ENCODE measurements at regions of chr9 and their contacts with region 1.

Region 1: GRCh38 chr9:38263532-38263931 is 129.0 kb upstream of the ALDH1B1 start:
- DNase-seq: peak; percentile 48
- ATAC-seq: no peak
- H3K4me3 ChIP-seq: no peak overlapping the region
- H3K27ac ChIP-seq: no peak overlapping the region
- H3K4me1 ChIP-seq: no peaks in the 10 kb centered on the region
- H3K27me3 ChIP-seq: peaks cover 5% of the 10 kb centered on the region
- CTCF ChIP-seq: peak; percentile 67
- POLR2A ChIP-seq: no peak
- RAD21 ChIP-seq: peak; percentile 80

Region 2: DNA sequence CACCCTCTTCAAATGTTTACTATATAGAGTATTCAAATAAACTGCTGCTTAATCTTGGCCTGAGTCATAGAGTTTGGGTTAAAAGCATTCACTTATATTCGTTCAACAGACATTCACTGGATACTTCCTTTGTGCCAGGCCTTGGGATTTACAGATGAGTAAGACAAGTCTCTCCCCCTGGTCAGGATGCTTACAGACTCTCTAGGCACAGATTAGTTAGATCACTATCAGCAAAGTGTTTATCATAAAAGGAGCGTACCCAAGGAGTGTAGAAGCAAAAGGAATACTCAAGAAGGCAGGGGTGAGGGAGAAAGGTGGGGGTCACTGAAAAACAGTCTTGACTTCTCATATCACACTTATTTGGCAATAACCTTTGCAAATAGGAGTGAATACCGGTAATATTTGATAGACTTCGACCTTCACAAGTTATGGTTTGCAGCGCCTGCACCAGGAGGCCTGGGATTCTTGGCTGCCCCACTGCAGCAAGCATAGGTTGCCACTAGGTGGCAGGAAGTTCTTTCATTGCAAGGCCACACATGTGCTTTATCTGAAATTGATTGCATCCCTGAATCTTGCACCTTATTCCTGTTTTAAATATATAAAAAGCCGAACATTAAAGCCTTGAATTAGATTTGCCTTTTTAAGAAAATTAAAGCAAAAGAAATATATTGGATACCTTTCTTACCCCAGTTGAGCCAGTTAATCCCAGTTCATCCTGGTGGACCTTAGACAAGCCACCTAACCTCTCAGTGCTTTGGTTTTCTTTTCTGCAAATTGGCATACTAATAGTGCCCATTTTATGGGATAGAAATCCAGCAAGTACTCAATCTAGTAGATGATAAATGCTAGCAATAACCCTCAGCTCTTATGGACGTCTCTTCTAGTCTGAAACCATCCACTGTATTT is 516.4 kb before region 1 on chr9:
- CTCF ChIA-PET with region 1: no interaction called
- POLR2A ChIA-PET with region 1: no interaction called
- dilution Hi-C with region 1: no loop called
- in situ Hi-C with region 1: no loop called
- intact Hi-C with region 1: loop called (anchors 5 kb)
- DNase-seq: peak; percentile 86
- ATAC-seq: peak; percentile 93
- H3K4me3 ChIP-seq: no peak overlapping the region
- H3K27ac ChIP-seq: no peak overlapping the region
- H3K4me1 ChIP-seq: peaks cover 8% of the 10 kb centered on the region
- H3K27me3 ChIP-seq: peaks cover 21% of the 10 kb centered on the region
- CTCF ChIP-seq: peak; percentile 79
- POLR2A ChIP-seq: no peak
- RAD21 ChIP-seq: peak; percentile 81

Region 3: DNA sequence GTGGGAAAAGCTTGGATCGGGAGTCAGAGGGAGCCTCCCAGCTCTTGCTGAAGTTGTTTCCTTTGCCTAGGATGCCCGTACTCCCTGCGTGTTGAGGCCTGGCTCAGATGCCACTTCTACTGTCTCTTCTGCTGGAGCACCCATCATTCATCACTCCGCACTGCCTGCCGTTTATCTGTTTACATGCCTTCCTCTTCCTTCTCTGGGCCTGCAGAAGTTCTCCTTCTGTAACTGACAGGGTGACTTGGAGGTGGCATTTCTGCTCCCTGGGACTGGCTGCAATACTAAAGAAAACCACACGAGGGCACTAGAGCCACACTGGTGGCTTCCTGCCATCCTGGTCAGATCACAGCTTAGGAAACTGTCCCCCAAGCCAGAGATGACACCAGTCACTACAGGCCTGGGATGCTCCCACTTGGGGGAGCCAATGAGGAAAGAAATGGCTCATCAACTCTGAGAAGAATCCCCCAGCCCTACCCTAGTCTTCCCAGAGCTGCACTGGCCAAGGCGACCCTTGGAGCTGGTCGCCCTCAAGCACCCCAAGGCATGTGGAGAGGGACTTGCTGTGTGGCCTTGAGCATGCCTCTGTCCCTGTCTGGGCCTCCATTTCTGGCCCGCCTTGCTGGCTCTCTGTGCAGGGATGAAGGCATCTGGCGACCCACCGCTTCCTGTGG is 349.9 kb before region 1 on chr9:
- CTCF ChIA-PET with region 1: interaction called, 3 read pairs
- POLR2A ChIA-PET with region 1: no interaction called
- dilution Hi-C with region 1: no loop called
- in situ Hi-C with region 1: loop called (anchors 5 kb)
- intact Hi-C with region 1: loop called (anchors 1 kb)
- DNase-seq: peak; percentile 72
- ATAC-seq: peak; percentile 90
- H3K4me3 ChIP-seq: no peak overlapping the region
- H3K27ac ChIP-seq: no peak overlapping the region
- H3K4me1 ChIP-seq: peaks cover 17% of the 10 kb centered on the region
- H3K27me3 ChIP-seq: no peaks in the 10 kb centered on the region
- CTCF ChIP-seq: peak; percentile 98
- POLR2A ChIP-seq: peak; percentile 60
- RAD21 ChIP-seq: peak; percentile 100

Region 4: DNA sequence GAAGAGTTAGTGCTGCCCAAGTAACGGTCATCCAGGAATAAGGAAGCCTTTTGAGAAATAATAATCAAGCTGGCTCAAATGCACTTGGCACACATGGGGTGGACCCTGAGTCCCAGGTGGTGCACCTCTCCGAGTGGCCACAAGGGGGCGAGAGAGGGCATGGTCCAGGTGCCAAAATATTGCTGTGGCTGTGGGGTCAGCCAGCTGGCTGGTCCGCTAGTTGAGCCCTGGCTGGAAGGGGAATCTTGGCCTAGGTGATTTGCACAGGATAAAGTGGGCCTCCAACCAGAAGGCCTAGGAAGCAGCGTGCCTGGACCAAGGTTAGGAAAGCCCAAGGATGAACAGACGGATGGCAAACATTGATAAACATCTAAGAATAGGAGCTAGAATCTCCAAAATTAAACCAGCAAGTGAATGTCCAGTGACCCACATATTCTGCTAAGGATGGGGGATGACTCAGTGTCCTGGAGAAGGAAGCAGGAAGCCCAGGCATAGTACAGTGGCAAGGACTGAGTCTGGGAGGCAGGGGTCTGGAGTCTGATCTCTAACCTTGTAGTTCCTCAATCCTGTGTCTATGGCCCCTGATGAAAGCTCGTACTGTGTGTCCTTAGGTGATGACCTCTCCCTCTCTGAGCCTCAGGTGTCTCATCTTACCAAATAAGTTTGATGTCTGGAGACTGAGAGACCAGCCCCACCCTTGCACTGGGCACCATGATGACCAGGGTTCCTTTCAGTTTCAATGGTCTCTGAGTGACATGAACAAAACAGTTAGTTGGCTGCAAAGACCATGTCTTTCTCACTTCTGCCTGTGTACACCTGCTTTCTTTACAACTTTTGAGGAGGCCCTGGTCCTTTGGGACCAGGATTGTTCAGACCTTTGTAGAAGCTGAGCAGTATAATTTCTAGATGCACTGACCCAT is 175.3 kb before region 1 on chr9:
- CTCF ChIA-PET with region 1: interaction called, 3 read pairs
- POLR2A ChIA-PET with region 1: no interaction called
- dilution Hi-C with region 1: no loop called
- in situ Hi-C with region 1: no loop called
- intact Hi-C with region 1: loop called (anchors 5 kb)
- DNase-seq: peak; percentile 37
- ATAC-seq: peak; percentile 84
- H3K4me3 ChIP-seq: no peak overlapping the region
- H3K27ac ChIP-seq: no peak overlapping the region
- H3K4me1 ChIP-seq: peaks cover 2% of the 10 kb centered on the region; the same call in 1 of the 2 replicates
- H3K27me3 ChIP-seq: no peaks in the 10 kb centered on the region
- CTCF ChIP-seq: peak; percentile 80
- POLR2A ChIP-seq: no peak
- RAD21 ChIP-seq: peak; percentile 77